Astrocyte of the cerebellum (primary cell): ENCODE measurements at regions of chrX and their contacts with region 1.

Region 1: DNA sequence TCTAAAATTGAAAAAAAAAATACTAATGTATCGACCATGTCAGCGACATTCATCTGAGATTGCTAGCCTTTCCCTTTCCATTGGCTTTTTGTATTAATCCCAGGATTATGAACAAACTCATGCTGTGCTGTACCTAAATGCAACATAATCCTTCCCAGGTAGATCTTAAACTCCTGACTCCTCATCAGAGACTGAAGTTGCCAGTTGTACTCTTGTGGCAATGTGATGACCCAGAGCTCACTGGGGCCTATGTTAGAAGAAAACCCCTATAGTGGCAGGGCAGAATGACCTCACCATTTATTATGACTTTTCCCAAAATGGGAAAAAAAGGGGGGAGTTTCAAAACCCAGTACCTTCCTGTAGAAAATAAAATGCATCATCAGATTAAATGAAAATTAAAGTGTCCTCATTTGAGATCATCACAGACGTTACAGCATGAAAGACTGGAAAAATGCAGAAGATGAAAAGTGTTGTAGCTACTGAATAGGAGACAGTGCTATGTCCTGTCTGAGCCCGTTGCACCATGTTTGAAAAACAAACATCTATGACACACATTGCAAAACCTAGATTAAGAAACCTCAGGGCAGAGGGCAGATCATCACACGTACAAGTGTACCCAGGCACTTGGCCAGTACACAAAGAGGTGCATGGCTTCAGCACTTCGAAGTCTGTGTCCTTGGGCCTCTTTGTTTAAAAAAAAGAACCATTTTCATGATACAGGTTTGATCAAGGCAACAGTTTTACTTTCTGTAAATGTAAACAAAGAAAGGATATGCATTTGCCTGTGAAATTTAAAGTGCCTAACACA is 6.8 kb upstream of the ACSL4 start:
- DNase-seq: no peak
- H3K4me3 ChIP-seq: no peak overlapping the region
- CTCF ChIP-seq: no peak

Region 2: DNA sequence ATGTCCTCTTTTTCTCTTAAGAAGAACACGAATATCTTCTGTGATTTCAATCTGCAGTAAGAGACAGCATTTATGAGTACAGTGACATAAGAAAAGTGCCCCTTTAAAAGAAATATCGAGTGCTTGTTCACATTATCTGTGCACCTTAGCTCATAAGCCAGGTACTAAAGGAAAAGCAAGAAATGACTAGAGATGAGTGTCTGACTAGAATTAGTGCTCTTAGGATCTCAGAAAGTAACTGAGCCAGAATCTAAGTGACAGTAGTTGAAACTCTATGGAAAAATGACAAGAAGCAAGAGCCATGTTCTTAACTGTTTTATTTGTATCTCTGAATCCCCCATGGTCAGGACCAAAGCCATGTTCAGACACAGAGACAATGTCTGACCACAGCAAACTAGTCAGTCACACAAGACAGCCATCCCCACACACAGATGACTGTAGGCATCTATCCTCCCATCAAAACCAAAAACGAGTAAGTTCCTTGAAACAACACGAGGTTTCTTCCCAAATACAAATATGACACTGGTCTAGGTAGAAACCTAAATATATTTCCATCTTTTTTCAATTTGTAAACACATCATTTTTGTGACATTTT is 43.6 kb before region 1 on chrX:
- in situ Hi-C with region 1: loop called (anchors 5 kb)
- DNase-seq: no peak
- H3K4me3 ChIP-seq: no peak overlapping the region
- CTCF ChIP-seq: no peak

Region 3: DNA sequence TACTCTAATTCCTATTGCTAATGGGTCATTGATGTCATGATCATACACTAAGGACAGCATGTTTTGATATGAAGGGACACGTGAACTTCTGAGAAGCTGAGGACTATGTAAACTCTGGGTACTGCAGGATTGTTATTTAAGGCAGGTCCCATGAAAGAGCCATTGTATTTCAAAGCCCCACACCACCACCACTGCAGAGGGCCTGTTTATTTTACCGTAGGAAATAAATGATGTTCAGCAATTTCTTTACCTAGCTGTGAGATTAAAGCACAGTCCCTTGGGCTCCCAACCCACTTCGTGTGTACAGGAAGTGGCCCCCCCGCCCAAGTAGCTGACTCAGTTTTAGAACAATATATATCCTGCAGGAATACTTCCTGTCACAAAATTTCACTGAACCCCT is 83.0 kb after region 1 on chrX:
- in situ Hi-C with region 1: loop called (anchors 5 kb)
- DNase-seq: no peak
- H3K4me3 ChIP-seq: no peak overlapping the region
- CTCF ChIP-seq: no peak